PC-9 (cell line): ENCODE measurements at regions of chr12 and their contacts with region 1.

Region 1: GRCh38 chr12:6224550-6224949 is 24.4 kb downstream of the CD9 start:
- DNase-seq: peak in 1 of 2 experiments; percentile 42
- H3K4me3 ChIP-seq: no peak overlapping the region
- H3K27ac ChIP-seq: no peak overlapping the region
- H3K4me1 ChIP-seq: peaks cover 88% of the 10 kb centered on the region
- H3K27me3 ChIP-seq: no peaks in the 10 kb centered on the region
- CTCF ChIP-seq: no peak

Region 2: DNA sequence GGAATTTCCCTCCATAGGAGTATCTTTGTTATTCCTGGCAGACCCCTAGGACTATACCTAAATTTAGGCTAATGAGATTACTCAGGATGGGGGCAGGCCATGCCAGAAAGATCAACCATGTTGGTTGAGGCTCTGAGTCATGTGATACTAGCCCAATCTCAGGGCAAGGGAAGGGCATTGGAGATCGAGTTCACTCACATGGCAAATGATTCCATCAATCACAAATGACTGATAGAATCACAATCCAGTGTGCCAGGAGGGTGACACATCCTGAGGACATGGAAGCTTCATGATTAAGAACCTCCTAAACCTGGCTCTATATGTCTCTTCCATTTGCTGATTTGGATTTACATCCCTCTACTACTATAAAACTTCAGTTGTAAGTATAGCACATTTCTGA is 610.3 kb before region 1 on chr12:
- CTCF ChIA-PET with region 1: no interaction called
- POLR2A ChIA-PET with region 1: no interaction called
- intact Hi-C with region 1: no loop called
- DNase-seq: no peak
- H3K4me3 ChIP-seq: no peak overlapping the region
- H3K27ac ChIP-seq: no peak overlapping the region
- H3K4me1 ChIP-seq: no peaks in the 10 kb centered on the region
- H3K27me3 ChIP-seq: peaks cover 29% of the 10 kb centered on the region; the same call in 1 of the 2 replicates
- CTCF ChIP-seq: no peak

Region 3: DNA sequence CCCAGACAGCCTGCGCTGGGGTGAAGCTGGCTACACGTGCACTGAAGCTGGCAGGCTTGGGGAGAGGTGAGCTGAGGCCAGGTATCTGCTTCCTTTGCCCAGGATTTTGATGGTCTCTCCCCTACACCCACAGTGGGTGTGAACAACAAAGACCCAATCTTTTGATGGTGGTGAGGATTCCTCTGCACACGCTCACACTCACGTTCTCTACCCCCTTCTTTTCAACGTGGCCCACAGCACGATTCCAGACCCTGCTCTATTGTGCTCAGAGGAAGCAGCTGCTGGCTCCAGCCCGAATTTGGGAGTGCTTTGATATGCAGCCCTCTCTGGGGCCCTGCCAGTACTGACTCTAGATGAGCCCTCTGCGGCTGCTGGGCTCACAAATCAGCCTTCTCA is 19.4 kb before region 1 on chr12:
- CTCF ChIA-PET with region 1: interaction called, 17 read pairs
- POLR2A ChIA-PET with region 1: interaction called, 38 read pairs
- intact Hi-C with region 1: loop called (anchors 1 kb)
- DNase-seq: peak in 1 of 2 experiments; percentile 20
- H3K4me3 ChIP-seq: no peak overlapping the region
- H3K27ac ChIP-seq: no peak overlapping the region
- H3K4me1 ChIP-seq: peaks cover 45% of the 10 kb centered on the region
- H3K27me3 ChIP-seq: no peaks in the 10 kb centered on the region
- CTCF ChIP-seq: no peak

Region 4: DNA sequence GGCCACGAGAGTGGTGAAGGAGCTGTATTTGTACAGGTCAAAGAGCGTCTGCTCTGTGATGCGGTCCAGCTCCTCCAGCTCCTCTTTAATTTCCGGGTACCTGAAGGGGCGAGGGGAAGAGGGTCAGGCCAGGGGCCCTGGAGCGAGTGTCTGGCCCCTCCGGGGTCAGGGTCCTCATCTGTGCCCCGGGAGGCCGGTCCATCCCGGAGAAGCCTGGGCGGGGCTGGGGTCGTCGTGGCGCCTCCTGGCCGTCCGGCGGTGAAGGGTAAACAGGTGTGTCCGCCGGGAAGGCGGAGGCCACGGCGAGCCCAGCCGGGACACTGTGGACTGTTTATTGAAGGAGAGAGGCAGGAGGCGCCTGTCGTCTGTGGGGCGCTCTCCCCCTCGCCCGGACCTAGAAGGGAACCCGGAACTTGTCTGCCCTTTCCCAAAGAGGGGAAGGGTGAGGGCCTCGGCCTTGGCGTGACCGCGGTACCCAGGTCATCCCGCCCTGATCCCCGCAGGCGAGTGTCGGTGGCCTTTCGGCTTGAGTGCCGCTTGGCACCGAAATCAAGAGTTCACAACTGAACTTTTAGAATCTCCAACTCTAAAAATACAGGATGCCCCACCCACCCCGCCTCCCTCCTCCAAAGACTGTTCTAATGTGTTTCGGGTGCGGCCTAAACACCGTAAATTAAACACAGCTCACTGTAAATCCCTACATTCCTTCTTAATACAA is 139.2 kb after region 1 on chr12:
- CTCF ChIA-PET with region 1: no interaction called
- POLR2A ChIA-PET with region 1: interaction called, 21 read pairs
- intact Hi-C with region 1: no loop called
- DNase-seq: peak; percentile 70 to 82
- H3K4me3 ChIP-seq: peak overlapping the region; percentile 64
- H3K27ac ChIP-seq: peak overlapping the region; percentile 86
- H3K4me1 ChIP-seq: peaks cover 69% of the 10 kb centered on the region
- H3K27me3 ChIP-seq: no peaks in the 10 kb centered on the region
- CTCF ChIP-seq: no peak; the same call in 1 of the 2 replicates